SK-N-SH (cell line): ENCODE measurements at regions of chr17 and their contacts with region 1.

Region 1: GRCh38 chr17:78378225-78379130 is at the start of gene PGS1:
- DNase-seq: peak; percentile 97
- H3K4me3 ChIP-seq: peak within 1 kb of the TSS; percentile 87 to 88
- H3K27ac ChIP-seq: peak within 1 kb of the TSS; percentile 64 to 81
- H3K4me1 ChIP-seq: peaks cover 16 to 57% of the 10 kb centered on the region in 2 experiments
- H3K27me3 ChIP-seq: no peaks in the 10 kb centered on the region
- CTCF ChIP-seq: no peak
- EP300 ChIP-seq: peak in 1 of 2 experiments; percentile 83; a peak in 1 of 4 replicates
- RAD21 ChIP-seq: peak; percentile 3; the same call in 1 of the 2 replicates
- polyA plus RNA-seq, gene PGS1: 88.4 and 106 TPM in 2 replicates

Region 2: GRCh38 chr17:77755410-77755963 is 623.0 kb before region 1 on chr17:
- CTCF ChIA-PET with region 1: no interaction called
- POLR2A ChIA-PET with region 1: no interaction called
- DNase-seq: no peak
- H3K4me3 ChIP-seq: no peak overlapping the region
- H3K27ac ChIP-seq: no peak overlapping the region
- H3K4me1 ChIP-seq: peaks cover 0 to 5% of the 10 kb centered on the region in 2 experiments; a peak in 1 of 4 replicates
- H3K27me3 ChIP-seq: peaks cover 10% of the 10 kb centered on the region; the same call in 1 of the 2 replicates
- CTCF ChIP-seq: no peak
- EP300 ChIP-seq: no peak
- RAD21 ChIP-seq: no peak

Region 3: GRCh38 chr17:78341559-78342448 is 36.7 kb before region 1 on chr17:
- CTCF ChIA-PET with region 1: no interaction called
- POLR2A ChIA-PET with region 1: no interaction called
- DNase-seq: peak; percentile 97
- H3K4me3 ChIP-seq: peak overlapping the region; percentile 31 to 36; a peak in 3 of 4 replicates
- H3K27ac ChIP-seq: peak overlapping the region; percentile 72 to 95
- H3K4me1 ChIP-seq: peaks cover 28 to 39% of the 10 kb centered on the region in 2 experiments; a peak in 3 of 4 replicates
- H3K27me3 ChIP-seq: no peaks in the 10 kb centered on the region
- CTCF ChIP-seq: no peak
- EP300 ChIP-seq: peak in 1 of 2 experiments; percentile 58; a peak in 1 of 4 replicates
- RAD21 ChIP-seq: no peak; the same call in 1 of the 2 replicates

Region 4: DNA sequence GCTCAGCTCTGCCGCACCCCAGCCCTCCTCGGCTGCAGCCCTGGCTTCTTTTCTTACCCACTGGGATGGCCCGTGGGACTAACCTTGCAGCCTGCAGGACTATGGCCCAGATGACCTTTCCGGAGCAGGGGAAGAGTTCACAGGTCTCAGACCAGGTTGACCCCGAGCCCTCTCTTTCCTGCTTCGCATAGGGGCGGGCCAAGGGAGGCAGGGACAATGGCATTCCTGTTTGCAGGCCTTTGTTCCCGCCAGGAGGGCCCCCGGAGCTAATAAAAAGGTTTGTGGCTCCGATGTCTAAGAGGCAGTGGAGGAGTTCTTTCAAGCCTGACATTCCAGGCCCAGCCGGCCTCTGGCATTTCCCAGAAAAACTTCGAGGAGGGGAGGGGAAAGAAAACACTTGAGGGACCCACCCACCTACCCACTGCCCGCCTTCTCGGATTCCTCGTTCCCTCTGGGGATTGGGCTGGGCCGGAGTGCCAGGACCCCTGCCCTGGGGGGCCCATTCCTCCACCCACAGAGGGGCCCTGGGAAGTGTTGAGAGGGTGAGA is 12.8 kb before region 1 on chr17:
- CTCF ChIA-PET with region 1: interaction called, 175 read pairs
- POLR2A ChIA-PET with region 1: interaction called, 4 read pairs
- DNase-seq: no peak
- H3K4me3 ChIP-seq: no peak overlapping the region
- H3K27ac ChIP-seq: no peak overlapping the region; a peak in 1 of 4 replicates
- H3K4me1 ChIP-seq: peaks cover 4 to 48% of the 10 kb centered on the region in 2 experiments; a peak in 1 of 4 replicates
- H3K27me3 ChIP-seq: no peaks in the 10 kb centered on the region
- CTCF ChIP-seq: no peak
- EP300 ChIP-seq: no peak
- RAD21 ChIP-seq: no peak

Region 5: DNA sequence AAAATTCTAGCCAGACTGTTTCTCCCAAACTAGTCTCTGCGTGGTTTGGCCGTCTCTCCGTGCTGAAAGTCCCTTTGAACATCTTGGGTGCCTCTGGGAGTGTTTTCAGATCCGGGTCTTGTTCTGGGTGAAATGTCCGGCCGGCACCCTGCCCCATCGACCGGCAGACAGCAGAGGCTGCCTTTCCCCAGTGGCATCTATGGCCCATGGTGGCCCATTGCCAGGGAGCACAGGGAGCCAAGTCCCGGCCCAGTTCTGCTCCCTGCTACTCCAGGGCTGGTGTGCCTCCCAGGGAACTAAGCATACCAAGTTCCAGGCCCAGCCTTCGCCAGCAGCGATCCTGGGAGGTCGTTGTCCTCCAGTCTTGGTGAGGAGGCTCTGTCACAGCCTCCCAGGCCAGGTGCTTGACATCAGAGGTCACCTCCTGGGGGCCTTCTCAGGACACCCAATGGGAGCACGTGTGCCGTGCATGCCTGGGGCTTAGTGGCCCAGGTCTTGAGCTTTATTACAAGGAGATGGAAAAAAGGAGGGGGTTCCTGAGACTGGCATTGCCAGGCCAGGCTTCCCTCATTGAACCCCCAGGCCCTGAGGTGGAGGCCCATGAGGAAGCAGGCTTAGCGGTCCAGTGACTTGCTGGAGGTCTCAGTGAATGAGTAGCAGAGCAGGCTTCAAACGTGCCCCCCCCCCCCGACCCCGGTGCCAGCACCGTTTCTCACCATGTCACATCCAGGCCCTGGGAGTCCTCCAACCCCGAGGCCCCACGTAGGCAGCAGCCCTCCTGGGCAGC is 53.9 kb after region 1 on chr17:
- CTCF ChIA-PET with region 1: no interaction called
- POLR2A ChIA-PET with region 1: no interaction called
- DNase-seq: no peak
- H3K4me3 ChIP-seq: no peak overlapping the region
- H3K27ac ChIP-seq: no peak overlapping the region
- H3K4me1 ChIP-seq: peaks cover 0 to 13% of the 10 kb centered on the region in 2 experiments; a peak in 1 of 4 replicates
- H3K27me3 ChIP-seq: no peaks in the 10 kb centered on the region
- CTCF ChIP-seq: no peak
- EP300 ChIP-seq: no peak
- RAD21 ChIP-seq: no peak